Right ventricle myocardium inferior (tissue), 1 donor: ENCODE measurements at regions of chr4 and their contacts with region 1.

Region 1: GRCh38 chr4:47786958-47787370 is 50.9 kb downstream of the CORIN start:
- DNase-seq: no peak
- ATAC-seq: no peak

Region 2: DNA sequence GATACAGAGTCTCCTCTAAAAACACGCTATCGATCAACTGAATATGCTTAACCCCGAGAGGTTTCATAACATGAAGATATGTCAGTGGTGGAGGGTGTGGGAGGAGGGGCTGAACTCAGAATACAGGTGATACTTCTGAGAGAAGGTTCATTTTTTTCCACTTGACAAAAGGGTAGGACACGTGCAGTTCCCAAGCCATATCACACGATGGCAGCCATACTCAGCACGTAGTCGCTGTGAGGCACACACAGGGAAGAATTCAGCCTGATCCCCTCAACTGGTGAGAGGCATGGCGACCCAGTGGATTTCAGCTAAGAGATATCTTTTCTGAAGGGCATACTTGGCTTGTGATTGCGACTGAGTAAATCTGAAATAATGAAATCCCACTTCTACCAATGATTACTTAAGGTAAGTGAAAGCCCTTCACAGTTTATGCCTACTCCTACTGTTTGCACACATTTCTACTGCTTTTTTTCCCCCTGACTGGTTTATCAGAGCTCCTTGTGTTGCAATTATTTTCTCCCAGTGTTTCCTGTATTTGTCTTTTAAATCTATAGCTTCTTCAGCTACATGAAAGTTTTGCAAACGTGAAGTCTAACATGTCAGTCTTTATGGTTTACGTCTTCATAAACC is 82.2 kb before region 1 on chr4:
- intact Hi-C with region 1: loop called (anchors 5 kb)
- DNase-seq: no peak
- ATAC-seq: peak; percentile 94

Region 3: DNA sequence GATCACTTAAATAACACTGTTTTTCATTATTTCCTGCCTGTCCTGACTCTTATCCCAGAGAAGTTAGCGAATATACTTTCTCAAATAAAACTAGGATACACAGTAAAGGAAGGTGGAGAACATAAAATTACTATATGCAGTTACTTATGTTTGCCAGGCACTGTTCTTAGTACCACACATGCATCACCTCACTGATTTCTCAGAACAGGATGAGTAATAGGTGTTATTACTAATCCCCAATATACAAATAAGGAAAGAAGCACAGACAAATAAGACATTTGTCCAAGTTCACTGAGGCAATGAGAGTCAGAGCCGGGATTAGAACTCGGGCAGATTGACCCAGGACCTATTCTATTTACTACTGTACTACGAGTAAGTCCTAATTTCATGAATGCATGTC is 40.8 kb before region 1 on chr4:
- intact Hi-C with region 1: loop called (anchors 2 kb)
- DNase-seq: no peak
- ATAC-seq: no peak

Region 4: GRCh38 chr4:47824840-47825239 is 37.9 kb after region 1 on chr4:
- intact Hi-C with region 1: loop called (anchors 2 kb)
- DNase-seq: peak; percentile 71
- ATAC-seq: peak; percentile 87

Region 5: DNA sequence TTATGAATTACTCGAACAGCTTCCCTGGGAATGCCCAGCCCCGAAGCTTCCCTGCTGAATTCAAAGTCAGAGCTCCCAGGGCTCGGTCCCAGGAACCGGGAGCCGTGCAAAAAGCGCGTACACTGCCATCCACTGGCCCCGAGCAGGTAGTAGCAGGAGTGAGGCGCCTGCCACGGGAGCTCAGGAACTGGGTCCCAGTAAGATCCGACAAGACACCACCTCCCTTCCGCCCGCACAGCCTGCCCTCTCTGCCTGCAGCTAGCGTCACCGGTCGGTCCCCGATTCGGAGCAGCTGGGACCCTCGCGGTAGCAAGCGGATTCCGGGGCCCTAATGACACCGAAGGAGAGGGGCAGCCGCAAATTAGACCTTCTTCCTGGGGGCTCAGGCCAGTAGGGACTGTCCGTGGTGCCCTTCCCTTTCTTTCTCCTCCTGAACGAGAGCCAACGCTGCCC is 49.7 kb after region 1 on chr4:
- intact Hi-C with region 1: loop called (anchors 5 kb)
- DNase-seq: peak; percentile 85
- ATAC-seq: peak; percentile 91